Naive thymus-derived CD8-positive, alpha-beta T cell (primary cell): ENCODE measurements at regions of chr11 and their contacts with region 1.

Region 1: GRCh38 chr11:2400069-2400760 is at the start of gene TSSC4:
- DNase-seq: peak; percentile 99 to 100 (median 100)
- ATAC-seq: peak; percentile 85 to 89
- H3K4me3 Mint-ChIP-seq: peak within 1 kb of the TSS; percentile 85 to 97 (median 92)
- H3K27ac Mint-ChIP-seq: peak within 1 kb of the TSS; percentile 91 to 98 (median 95)
- H3K4me1 Mint-ChIP-seq: peaks cover 5 to 25% (median 18%) of the 10 kb centered on the region in 4 donors
- H3K27me3 Mint-ChIP-seq: no peaks in the 10 kb centered on the region
- polyA plus RNA-seq, gene TSSC4: 49.0 to 68.3 (median 54.7) TPM

Region 2: DNA sequence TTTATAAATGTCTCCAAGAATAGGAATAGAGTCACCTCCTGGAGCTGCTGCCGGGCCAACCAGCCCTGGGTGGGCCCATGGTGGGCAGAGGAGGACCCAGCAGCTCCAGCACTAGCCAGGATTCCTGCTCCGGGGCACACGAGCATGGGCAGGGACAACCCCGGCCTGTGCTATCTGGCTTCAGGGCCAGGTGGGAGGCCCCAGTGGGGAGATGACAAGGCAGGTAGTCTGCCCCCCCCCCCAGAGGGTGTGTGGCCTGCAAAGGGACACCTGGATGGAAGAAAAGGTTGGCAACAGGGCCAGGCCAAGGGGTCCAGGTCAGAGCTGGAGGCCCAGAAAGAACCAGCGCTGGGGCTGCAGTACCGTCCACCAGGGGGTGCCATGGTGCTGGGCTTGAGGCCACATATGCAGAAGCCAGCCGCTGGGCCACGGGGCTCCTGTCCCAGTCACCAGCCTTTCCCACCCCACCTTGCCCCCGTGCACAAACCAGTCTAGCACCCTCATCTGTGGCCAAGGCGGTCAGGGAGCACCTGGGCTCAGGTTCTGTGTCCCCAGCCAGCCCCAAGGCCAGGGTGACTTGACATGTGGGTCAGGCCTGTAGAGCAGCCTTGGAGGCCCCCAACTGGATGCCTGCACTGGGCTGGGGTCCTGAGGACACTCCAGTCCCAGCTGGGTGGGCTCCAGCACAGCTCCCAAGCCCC is 94.9 kb before region 1 on chr11:
- POLR2A ChIA-PET with region 1: interaction called, 113 read pairs
- DNase-seq: peak; percentile 62 to 90 (median 78)
- ATAC-seq: peak; percentile 38 to 41
- H3K4me3 Mint-ChIP-seq: peak overlapping the region; percentile 81 to 98 (median 93)
- H3K27ac Mint-ChIP-seq: peak overlapping the region; percentile 85 to 98 (median 94)
- H3K4me1 Mint-ChIP-seq: peaks cover 26 to 67% (median 51%) of the 10 kb centered on the region in 4 donors
- H3K27me3 Mint-ChIP-seq: no peaks in the 10 kb centered on the region

Region 3: DNA sequence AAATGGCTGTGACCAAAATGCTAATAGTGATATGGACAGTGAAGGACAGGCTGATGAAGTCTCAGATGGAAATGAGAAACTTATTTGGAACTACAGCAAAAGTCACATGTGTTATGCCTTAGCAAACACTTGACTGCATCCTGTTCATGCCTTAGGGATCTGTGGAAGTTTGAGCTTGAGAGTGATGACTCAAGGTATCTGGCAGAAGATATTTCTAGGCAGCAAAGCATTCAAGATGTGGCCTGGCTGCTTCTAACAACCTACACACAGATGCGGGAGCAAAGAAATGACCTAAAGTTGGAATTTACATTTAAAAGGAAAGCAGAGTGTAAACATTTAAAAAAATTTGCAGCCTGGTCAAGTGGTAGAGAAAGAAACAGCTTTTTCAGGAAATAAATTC is 51.2 kb before region 1 on chr11:
- POLR2A ChIA-PET with region 1: no interaction called
- DNase-seq: no peak
- ATAC-seq: no peak
- H3K4me3 Mint-ChIP-seq: no peak overlapping the region
- H3K27ac Mint-ChIP-seq: no peak overlapping the region
- H3K4me1 Mint-ChIP-seq: no peaks in the 10 kb centered on the region
- H3K27me3 Mint-ChIP-seq: peaks cover 0 to 2% (median 0%) of the 10 kb centered on the region in 5 donors

Region 4: GRCh38 chr11:2377511-2378443 is 22.4 kb before region 1 on chr11:
- POLR2A ChIA-PET with region 1: interaction called, 17 read pairs
- DNase-seq: peak in 8 of 10 donors; percentile 20 to 75 (median 49)
- ATAC-seq: peak; percentile 59 to 67
- H3K4me3 Mint-ChIP-seq: peak overlapping the region; percentile 71 to 87 (median 80)
- H3K27ac Mint-ChIP-seq: peak overlapping the region in 9 of 10 donors; percentile 43 to 92 (median 79)
- H3K4me1 Mint-ChIP-seq: peaks cover 11 to 46% (median 39%) of the 10 kb centered on the region in 4 donors
- H3K27me3 Mint-ChIP-seq: no peaks in the 10 kb centered on the region

Region 5: DNA sequence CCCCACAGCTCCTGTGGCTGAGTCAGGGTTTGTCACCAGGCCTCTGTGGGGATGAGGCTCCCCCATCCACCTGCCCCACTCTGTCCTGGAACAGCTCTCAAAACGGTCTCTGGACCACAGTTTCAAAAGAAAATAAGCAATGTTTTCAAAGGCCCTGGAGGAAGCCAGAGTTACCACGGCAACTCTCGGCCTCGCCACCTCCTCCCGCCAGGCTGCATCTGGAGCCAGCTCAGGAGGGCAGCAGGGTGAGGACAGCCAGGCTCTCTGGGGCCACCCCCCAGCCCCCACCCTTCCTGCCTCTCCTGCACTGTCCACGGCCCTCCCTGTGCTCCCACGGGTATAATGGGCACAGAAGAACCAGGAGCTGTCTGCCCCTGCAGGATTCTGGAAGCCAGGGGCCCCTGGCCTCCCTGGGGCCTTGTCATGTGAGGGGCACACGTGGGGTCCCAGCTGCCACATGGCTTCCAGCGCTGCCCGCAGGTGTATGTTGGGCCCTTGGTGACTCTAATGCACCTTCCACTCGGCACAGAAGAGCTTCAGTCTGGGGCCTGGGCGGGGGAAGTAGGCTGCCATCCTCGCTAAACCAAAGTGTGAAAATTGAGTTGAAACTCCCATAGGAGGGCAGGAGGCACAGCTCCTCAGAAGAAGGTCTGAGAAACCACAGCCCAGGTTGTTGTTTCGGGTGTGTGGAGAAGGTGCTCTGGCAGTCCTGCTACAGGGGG is 12.8 kb before region 1 on chr11:
- POLR2A ChIA-PET with region 1: interaction called, 11 read pairs
- DNase-seq: peak in 1 of 10 donors; percentile 55
- ATAC-seq: peak in 1 of 2 donors; percentile 20
- H3K4me3 Mint-ChIP-seq: peak overlapping the region in 4 of 10 donors; percentile 15 to 66 (median 24)
- H3K27ac Mint-ChIP-seq: peak overlapping the region in 8 of 10 donors; percentile 18 to 74 (median 42)
- H3K4me1 Mint-ChIP-seq: peaks cover 27 to 72% (median 68%) of the 10 kb centered on the region in 4 donors
- H3K27me3 Mint-ChIP-seq: no peaks in the 10 kb centered on the region